Activated CD8-positive, alpha-beta T cell treated with anti-CD3 and anti-CD28 coated beads, Interleukin-2, amount 10 ng/mL, durations not matched to agents 7 days and 5 days (primary cell): ENCODE measurements at regions of chr2 and their contacts with region 1.

Region 1: DNA sequence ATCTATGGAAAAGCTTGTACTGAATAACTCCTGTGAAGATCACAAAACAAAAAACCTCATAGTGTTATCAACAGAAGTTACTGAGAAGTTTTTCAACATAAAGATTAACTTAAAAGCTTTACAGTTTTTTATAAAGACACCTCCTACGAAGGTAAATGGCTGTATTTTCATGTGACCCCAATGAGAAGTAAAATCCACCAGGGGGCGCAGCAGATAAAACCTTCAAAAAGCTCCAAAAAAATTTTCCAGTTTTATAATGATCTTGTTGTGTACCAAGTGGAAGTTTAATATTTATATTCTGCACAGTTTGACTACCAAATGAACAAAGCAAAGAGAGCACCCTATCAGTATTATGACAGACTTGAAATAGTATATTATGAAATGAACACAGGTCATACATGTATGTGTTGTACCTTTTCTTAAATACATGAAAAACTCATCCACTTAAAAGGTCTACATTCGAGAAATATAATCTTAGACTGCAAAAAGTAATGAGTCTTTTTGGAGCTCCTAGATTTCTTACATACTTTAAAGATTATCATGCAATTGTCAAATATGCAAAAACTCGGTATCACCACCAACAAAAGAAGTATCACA is 38.5 kb downstream of the PNO1 start:
- DNase-seq: peak; percentile 55
- ATAC-seq: no peak
- H3K4me3 Mint-ChIP-seq: no peak overlapping the region
- H3K27ac Mint-ChIP-seq: no peak overlapping the region
- H3K4me1 Mint-ChIP-seq: peaks cover 13% of the 10 kb centered on the region
- H3K27me3 Mint-ChIP-seq: no peaks in the 10 kb centered on the region

Region 2: DNA sequence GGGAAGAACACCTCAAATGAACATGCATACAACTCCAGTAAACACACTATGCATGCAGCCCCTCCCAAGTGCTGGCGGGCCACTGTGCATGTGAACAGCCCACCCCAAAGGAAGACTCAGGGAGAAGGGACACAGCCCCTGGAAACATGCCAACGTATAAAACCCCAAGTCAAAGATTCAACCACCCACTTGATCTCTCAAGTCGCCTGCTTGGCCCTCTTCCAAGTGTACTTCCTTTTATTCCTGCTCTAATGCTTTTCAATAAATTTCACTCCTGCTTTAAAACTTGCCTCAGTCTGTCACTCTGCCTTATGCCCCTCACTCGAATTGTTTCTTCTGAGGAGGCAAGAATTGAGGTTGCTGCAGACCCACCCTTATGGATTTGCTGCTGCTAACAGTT is 272.5 kb before region 1 on chr2:
- CTCF ChIA-PET with region 1: no interaction called
- POLR2A ChIA-PET with region 1: no interaction called
- DNase-seq: no peak
- ATAC-seq: no peak
- H3K4me3 Mint-ChIP-seq: no peak overlapping the region
- H3K27ac Mint-ChIP-seq: no peak overlapping the region
- H3K4me1 Mint-ChIP-seq: no peaks in the 10 kb centered on the region
- H3K27me3 Mint-ChIP-seq: peaks cover 2% of the 10 kb centered on the region

Region 3: DNA sequence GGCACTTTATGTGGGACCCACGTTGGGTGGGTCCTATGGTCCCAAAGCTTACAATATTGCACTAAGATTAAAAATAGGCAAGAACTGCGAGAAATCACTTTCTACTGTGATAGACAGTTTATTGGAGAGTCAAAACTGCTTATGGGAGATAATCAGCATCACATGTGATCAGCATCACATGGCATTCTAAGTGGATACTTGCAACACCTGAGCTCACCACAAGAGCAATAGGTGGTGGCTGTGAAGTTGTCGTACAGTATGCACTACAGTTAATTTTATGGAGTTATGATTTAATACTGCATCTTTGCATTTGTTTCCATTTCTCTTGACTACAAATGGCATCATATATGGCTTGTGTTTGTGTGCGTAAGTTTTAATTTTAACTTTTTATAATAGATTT is 26.9 kb before region 1 on chr2:
- CTCF ChIA-PET with region 1: interaction called, 16 read pairs
- POLR2A ChIA-PET with region 1: no interaction called
- DNase-seq: peak; percentile 20
- ATAC-seq: peak; percentile 45
- H3K4me3 Mint-ChIP-seq: no peak overlapping the region
- H3K27ac Mint-ChIP-seq: no peak overlapping the region
- H3K4me1 Mint-ChIP-seq: peaks cover 8% of the 10 kb centered on the region
- H3K27me3 Mint-ChIP-seq: no peaks in the 10 kb centered on the region

Region 4: GRCh38 chr2:68185541-68186164 is 10.6 kb before region 1 on chr2:
- CTCF ChIA-PET with region 1: interaction called, 41 read pairs
- POLR2A ChIA-PET with region 1: no interaction called
- DNase-seq: peak; percentile 66
- ATAC-seq: peak; percentile 60
- H3K4me3 Mint-ChIP-seq: no peak overlapping the region
- H3K27ac Mint-ChIP-seq: no peak overlapping the region
- H3K4me1 Mint-ChIP-seq: peaks cover 10% of the 10 kb centered on the region
- H3K27me3 Mint-ChIP-seq: no peaks in the 10 kb centered on the region

Region 5: GRCh38 chr2:68206793-68207192 is 10.6 kb after region 1 on chr2:
- CTCF ChIA-PET with region 1: interaction called, 15 read pairs
- POLR2A ChIA-PET with region 1: no interaction called
- DNase-seq: no peak
- ATAC-seq: no peak
- H3K4me3 Mint-ChIP-seq: no peak overlapping the region
- H3K27ac Mint-ChIP-seq: peak overlapping the region; percentile 7
- H3K4me1 Mint-ChIP-seq: peaks cover 39% of the 10 kb centered on the region
- H3K27me3 Mint-ChIP-seq: no peaks in the 10 kb centered on the region

Region 6: DNA sequence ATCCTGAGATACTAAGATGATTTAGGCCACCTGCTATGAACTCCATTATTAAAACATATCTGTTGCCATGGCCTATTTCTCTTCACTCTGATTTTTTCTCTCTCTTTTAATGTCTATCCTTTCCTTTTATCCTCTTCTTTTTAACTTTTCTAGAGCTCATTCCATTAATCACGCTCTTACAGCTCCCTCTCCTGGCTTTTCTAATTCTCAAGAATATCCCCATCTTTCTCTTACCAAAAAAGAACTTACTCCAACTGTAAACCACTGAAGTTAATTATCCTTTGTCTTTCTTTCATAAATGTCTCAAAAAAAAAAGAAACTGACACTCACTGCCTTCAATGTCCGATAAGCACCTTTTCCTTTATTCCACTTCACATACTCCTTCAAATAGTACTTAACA is 48.2 kb after region 1 on chr2:
- CTCF ChIA-PET with region 1: interaction called, 13 read pairs
- POLR2A ChIA-PET with region 1: no interaction called
- DNase-seq: no peak
- ATAC-seq: no peak
- H3K4me3 Mint-ChIP-seq: no peak overlapping the region
- H3K27ac Mint-ChIP-seq: no peak overlapping the region
- H3K4me1 Mint-ChIP-seq: peaks cover 11% of the 10 kb centered on the region
- H3K27me3 Mint-ChIP-seq: no peaks in the 10 kb centered on the region

Region 7: DNA sequence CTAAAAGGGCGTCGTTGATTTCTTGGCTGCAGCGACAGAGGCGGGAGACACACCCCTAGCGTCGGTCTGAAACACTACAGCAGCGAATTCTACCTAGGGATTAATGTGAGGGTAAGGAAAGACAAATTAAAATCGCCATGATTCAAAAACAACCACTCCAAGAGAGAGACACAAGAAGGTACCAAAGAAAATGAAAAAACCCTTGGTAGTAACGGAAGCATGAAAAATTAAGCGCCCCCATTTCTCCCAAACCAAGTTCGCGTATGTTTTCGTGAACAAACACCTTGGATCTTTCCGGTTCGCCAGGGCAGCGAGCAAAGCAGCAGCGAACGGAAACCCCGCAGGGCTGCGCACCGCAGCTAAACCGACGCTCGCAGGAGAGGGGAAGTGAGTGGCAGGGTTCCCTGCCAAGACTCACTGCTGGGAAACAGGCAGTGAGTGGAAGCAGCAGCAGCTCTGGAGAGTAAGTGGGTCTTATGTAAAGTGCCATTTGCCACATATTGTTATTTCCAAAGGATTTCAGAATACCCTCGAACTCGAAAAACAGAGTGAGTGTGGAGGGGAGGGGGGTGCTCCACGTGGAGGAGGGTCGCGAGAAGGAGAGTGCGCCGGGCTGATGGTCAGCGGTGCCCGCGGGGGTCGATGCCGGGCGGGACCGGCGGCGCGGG is 55.1 kb after region 1 on chr2:
- CTCF ChIA-PET with region 1: interaction called, 13 read pairs
- POLR2A ChIA-PET with region 1: no interaction called
- DNase-seq: peak; percentile 86
- ATAC-seq: peak; percentile 60
- H3K4me3 Mint-ChIP-seq: peak overlapping the region; percentile 83
- H3K27ac Mint-ChIP-seq: peak overlapping the region; percentile 93
- H3K4me1 Mint-ChIP-seq: peaks cover 35% of the 10 kb centered on the region
- H3K27me3 Mint-ChIP-seq: no peaks in the 10 kb centered on the region

Region 8: GRCh38 chr2:68282811-68283418 is 86.7 kb after region 1 on chr2:
- CTCF ChIA-PET with region 1: interaction called, 20 read pairs
- POLR2A ChIA-PET with region 1: no interaction called
- DNase-seq: peak; percentile 27
- ATAC-seq: no peak
- H3K4me3 Mint-ChIP-seq: no peak overlapping the region
- H3K27ac Mint-ChIP-seq: no peak overlapping the region
- H3K4me1 Mint-ChIP-seq: no peaks in the 10 kb centered on the region
- H3K27me3 Mint-ChIP-seq: peaks cover 52% of the 10 kb centered on the region